A549 (cell line): ENCODE measurements at regions of chr2 and their contacts with region 1.

Region 1: GRCh38 chr2:9984217-9984739 is 32.8 kb downstream of the GRHL1 start:
- DNase-seq: peak; percentile 46 to 90
- ATAC-seq: peak; percentile 63 to 89
- H3K4me3 ChIP-seq: no peak overlapping the region
- H3K27ac ChIP-seq: no peak overlapping the region
- H3K4me1 ChIP-seq: 0 out of 3 replicates have a peak, but pooled peaks cover 3% of the 10 kb centered on the region
- CTCF ChIP-seq: peak; percentile 77
- EP300 ChIP-seq: no peak
- POLR2A ChIP-seq: no peak
- RAD21 ChIP-seq: peak; percentile 61 to 66

Region 2: DNA sequence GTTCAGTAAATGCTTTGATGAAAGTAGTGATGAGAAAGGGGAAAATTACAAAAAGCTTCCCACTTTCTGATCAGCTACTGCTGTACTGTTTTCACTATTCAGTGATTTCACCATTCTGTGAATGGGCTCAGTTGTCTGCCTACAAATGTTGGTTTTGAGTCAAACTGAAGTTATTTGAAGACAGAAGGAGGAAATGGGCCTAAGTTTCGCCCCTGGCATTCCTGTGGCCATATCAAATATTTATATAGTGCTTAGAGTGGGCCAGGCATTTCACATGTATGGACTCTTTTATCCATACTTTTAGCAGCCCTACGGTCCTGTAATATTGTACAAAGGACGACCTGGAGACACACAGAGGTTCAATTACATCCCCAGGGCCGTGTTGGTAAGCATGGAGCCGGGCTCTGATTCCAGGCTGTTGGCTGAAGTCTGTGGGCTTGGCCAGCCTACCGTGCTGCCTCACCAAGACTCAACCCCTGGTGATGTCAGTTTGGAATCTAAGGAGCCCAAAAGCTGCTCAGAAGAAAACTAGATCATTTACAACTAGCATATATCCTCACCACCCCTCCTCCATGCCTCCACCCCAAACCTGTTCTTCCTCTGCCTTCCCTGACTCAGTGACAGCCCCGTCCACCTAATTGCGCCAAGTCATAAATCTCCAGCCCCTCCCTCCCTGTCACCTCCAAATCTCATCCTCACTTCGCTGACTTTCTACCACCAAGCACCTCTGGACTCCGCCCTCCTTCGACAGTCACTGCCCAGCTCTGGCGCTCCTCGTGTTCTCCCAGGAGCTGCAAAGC is 42.9 kb before region 1 on chr2:
- CTCF ChIA-PET with region 1: interaction called, 10 read pairs
- POLR2A ChIA-PET with region 1: no interaction called
- DNase-seq: no peak
- ATAC-seq: peak in 1 of 2 experiments; percentile 35; a peak in 3 of 6 replicates
- H3K4me3 ChIP-seq: no peak overlapping the region
- H3K27ac ChIP-seq: no peak overlapping the region
- H3K4me1 ChIP-seq: peaks cover 7% of the 10 kb centered on the region; the same call in 2 of the 3 replicates
- CTCF ChIP-seq: no peak
- EP300 ChIP-seq: no peak
- POLR2A ChIP-seq: no peak
- RAD21 ChIP-seq: no peak

Region 3: DNA sequence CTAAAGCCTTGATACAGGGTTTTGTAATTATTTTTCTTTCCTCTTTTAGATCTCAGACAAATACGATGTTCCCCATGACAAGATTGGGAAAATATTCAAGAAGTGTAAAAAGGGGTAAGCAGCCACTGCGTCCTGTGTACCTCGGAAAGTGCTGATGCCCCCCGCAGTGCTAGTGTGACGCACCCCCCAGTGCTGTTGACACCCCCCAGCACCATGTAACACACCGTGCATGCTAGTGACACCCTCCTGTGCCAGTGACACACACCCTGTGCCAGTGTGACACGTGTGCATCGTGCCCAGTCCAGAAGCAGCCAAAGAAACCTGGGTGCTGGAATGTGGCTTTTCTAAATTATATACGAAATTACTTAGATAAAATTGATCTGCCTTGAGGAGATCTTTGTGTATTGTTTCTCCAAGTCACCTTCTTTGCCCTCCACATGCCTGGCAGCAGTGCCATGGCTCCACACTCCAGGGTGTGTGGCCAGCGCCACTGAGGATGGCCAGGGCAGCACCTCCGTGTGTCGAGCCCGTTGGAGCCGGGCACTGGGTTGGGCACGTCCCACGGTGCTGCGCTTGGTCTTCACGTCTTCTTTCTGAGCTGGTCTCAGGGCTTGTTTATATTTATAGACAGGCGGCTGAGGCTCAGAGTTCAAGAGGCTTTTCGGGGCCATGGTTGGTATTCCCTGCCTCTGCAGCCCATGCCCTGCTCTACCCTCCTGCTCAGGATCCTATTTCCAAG is 14.8 kb after region 1 on chr2:
- CTCF ChIA-PET with region 1: interaction called, 65 read pairs
- POLR2A ChIA-PET with region 1: no interaction called
- DNase-seq: no peak
- ATAC-seq: no peak
- H3K4me3 ChIP-seq: no peak overlapping the region
- H3K27ac ChIP-seq: no peak overlapping the region
- H3K4me1 ChIP-seq: no peaks in the 10 kb centered on the region
- CTCF ChIP-seq: no peak
- EP300 ChIP-seq: no peak
- POLR2A ChIP-seq: no peak
- RAD21 ChIP-seq: no peak

Region 4: DNA sequence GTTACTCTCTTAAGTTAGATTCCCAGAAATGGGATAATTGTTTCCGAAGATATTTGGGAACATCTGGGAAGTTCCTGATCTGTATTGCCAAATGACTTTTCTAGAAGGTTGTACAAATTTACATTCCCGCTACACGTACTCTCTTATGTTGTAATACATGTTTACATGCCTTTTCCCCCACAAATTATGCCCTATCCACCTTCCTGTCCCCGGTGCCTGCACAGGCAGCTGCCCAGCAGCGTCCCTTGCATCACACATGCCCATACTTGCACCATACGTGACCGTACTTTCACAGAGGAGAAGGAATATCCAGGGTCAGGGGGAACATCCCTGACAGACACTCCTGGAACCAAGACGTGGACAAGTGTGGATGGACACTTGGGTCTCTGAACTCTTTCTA is 34.9 kb after region 1 on chr2:
- CTCF ChIA-PET with region 1: interaction called, 14 read pairs
- POLR2A ChIA-PET with region 1: no interaction called
- DNase-seq: no peak
- ATAC-seq: no peak
- H3K4me3 ChIP-seq: no peak overlapping the region
- H3K27ac ChIP-seq: no peak overlapping the region
- H3K4me1 ChIP-seq: no peaks in the 10 kb centered on the region
- CTCF ChIP-seq: no peak
- EP300 ChIP-seq: no peak
- POLR2A ChIP-seq: no peak
- RAD21 ChIP-seq: no peak

Region 5: GRCh38 chr2:10072656-10073480 is 88.6 kb after region 1 on chr2:
- CTCF ChIA-PET with region 1: interaction called, 13 read pairs
- POLR2A ChIA-PET with region 1: no interaction called
- DNase-seq: peak; percentile 88 to 95
- ATAC-seq: peak; percentile 94 to 96
- H3K4me3 ChIP-seq: no peak overlapping the region
- H3K27ac ChIP-seq: no peak overlapping the region
- H3K4me1 ChIP-seq: peaks cover 4% of the 10 kb centered on the region; the same call in 1 of the 3 replicates
- CTCF ChIP-seq: peak; percentile 95
- EP300 ChIP-seq: no peak
- POLR2A ChIP-seq: no peak
- RAD21 ChIP-seq: peak; percentile 81 to 85

Region 6: GRCh38 chr2:10083692-10084181 is 99.5 kb after region 1 on chr2:
- CTCF ChIA-PET with region 1: no interaction called
- POLR2A ChIA-PET with region 1: no interaction called
- DNase-seq: no peak
- ATAC-seq: no peak
- H3K4me3 ChIP-seq: no peak overlapping the region
- H3K27ac ChIP-seq: no peak overlapping the region
- H3K4me1 ChIP-seq: 0 out of 3 replicates have a peak, but pooled peaks cover 7% of the 10 kb centered on the region
- CTCF ChIP-seq: no peak
- EP300 ChIP-seq: no peak
- POLR2A ChIP-seq: no peak
- RAD21 ChIP-seq: no peak